Activated CD4-positive, alpha-beta memory T cell treated with anti-CD3 and anti-CD28 coated beads, Interleukin-2, amount 10 ng/mL, durations not matched to agents 7 days and 5 days (primary cell): ENCODE measurements at regions of chr6 and their contacts with region 1.

Region 1: DNA sequence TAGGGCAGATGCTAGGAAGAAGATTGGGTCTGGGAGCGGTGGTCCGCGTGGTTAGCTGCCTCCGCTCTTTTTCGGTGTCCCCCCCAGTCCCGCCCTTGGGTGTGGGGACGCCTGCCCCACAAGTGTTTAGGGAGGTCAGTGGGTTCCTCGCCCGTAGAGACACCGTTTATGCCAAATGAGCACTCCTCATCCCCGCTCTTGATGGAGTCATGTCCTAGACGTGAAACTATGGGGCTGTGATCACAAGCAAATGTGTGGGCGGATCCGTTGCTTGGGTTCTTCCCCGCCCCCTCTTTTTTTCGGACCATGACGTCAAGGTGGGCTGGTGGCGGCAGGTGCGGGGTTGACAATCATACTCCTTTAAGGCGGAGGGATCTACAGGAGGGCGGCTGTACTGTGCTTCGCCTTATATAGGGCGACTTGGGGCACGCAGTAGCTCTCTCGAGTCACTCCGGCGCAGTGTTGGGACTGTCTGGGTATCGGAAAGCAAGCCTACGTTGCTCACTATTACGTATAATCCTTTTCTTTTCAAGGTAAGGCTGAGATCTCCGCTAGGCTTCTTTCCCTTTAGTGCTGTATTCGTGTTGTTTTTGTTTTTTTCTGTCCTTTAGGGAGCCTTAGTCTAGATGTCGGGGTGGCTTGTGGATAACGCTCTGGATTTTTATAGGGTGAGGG is at the start of gene HSP90AB1:
- DNase-seq: peak; percentile 98
- H3K4me3 Mint-ChIP-seq: peak within 1 kb of the TSS; percentile 99
- H3K27ac Mint-ChIP-seq: peak within 1 kb of the TSS; percentile 97
- H3K4me1 Mint-ChIP-seq: peaks cover 49% of the 10 kb centered on the region
- H3K27me3 Mint-ChIP-seq: no peaks in the 10 kb centered on the region
- total RNA-seq, gene HSP90AB1: 478 to 479 TPM

Region 2: DNA sequence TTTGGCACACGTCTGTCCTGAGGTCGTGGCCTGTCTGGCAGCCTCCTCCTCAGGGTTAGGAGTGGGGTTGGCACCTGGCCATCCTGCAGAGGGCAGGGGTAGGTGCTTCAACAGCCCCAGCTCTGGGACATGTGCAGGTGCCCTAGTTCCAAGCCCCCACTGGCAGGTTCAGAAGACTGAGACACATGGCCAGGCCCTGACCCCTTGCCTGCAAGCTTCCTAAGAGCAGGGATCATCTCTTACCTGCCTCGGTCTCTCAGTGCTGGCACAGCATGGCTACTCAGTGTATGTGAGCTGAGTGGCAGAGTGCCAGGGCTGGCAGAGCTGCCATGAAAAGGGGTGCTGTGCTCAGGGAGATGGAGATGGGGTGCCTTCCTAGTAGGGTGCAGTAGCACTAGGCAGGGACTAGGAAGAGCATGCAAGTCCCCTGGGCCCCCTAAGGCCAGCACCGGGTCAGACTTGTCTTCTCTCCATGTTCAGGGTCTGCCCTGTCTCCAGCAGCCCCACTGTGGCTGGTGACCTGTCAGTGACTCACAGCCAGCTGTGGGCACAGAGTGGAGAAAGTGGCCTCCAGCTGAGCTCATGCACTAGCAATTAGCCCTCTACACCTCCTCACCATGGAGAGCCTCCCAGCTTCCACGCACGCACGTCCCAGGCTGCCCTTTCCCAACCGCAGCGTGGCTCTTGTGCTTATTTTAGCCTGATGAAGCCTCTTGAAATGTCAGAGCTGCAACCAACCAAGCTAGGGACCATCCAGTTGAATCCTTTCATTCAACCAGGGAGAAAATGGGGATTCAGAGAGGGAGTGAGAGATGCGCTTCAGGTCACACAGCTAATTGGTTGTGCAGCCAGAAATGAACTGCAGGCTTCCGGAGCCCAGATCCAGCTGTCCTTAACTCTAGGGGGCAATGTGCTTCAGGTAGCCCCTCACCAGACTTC is 236.1 kb before region 1 on chr6:
- CTCF ChIA-PET with region 1: no interaction called
- POLR2A ChIA-PET with region 1: no interaction called
- DNase-seq: no peak
- H3K4me3 Mint-ChIP-seq: no peak overlapping the region
- H3K27ac Mint-ChIP-seq: no peak overlapping the region
- H3K4me1 Mint-ChIP-seq: no peaks in the 10 kb centered on the region
- H3K27me3 Mint-ChIP-seq: peaks cover 27% of the 10 kb centered on the region

Region 3: DNA sequence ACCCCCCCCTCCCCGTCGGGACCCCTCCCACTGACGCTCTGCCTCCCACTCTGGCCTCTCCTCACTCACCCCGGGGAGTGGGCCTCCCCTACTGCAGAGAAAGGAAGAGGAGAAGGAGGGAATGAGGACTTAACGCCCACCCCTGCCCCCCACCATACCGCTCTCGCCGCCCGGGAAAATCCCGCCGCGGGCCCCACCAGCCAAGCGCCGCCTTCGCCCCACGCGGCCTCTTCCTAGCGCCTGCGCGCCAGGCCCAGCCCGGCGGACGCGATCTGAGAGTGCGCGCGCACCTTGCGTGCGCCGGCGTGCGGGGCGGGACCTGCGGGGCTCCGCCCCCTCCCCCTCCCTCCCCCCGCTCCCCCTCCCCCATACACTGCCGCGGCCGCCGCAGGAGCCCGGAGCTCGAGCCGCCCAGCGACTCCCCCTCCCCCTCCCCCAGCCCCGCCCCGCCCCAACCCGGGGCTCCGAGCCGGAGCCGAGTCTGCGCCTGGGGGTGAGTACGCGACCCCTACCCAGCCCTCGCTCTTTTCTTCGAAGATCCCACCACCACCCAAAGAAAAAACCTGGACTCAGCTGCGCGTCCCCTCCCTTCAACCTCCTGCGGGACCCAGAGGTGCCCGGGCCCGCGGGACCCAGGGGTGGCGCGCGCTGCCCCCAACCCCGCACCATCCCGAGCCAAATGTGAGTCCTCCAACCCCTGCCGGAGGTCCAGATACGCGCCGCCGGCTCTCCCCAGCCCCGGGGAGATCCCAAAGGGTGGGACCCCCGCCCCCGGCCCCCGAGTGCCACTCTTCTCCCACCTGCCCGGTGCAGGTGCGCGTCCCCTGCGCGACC is 119.4 kb before region 1 on chr6 and contains the starts of genes MRPL14 and TMEM63B:
- CTCF ChIA-PET with region 1: no interaction called
- POLR2A ChIA-PET with region 1: interaction called, 11 read pairs
- DNase-seq: peak; percentile 90
- H3K4me3 Mint-ChIP-seq: peak within 1 kb of the TSS; percentile 91
- H3K27ac Mint-ChIP-seq: peak within 1 kb of the TSS; percentile 83
- H3K4me1 Mint-ChIP-seq: peaks cover 47% of the 10 kb centered on the region
- H3K27me3 Mint-ChIP-seq: no peaks in the 10 kb centered on the region
- total RNA-seq, gene MRPL14: 36.0 to 39.0 TPM
- total RNA-seq, gene TMEM63B: 14.7 to 15.5 TPM

Region 4: DNA sequence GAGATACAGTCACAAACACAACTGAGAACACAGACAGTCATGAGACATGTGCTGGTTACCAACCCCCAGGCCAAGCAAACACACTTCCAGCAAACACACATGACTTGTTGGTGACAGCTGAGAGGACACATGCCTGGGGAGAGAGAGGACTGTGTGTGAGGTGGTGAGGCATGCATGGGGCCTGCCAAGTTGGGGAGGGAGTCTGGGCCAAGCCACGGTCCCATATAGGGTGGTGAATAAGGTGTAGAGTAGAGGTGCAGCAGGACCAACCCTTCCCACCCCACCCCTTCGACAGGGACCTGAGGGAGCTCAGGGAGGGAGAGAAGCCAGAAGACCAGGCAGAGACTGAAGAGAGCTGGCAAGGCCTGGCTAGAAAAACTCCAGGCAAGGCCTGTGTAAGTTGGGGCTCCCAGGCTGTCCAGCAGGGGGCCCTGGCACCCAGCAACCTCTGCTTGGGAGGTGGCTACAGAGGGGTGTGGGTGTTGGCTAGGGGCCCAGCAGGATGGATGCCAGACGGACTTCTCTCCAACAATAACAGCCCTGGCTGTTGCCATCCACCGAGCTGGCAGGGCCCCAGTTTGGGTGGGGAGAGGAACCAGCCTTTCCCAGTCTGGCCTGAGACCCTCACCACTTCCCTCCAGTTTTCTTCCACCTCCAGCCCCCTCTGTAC is 25.4 kb before region 1 on chr6:
- CTCF ChIA-PET with region 1: interaction called, 12 read pairs
- POLR2A ChIA-PET with region 1: interaction called, 88 read pairs
- DNase-seq: peak; percentile 82
- H3K4me3 Mint-ChIP-seq: no peak overlapping the region
- H3K27ac Mint-ChIP-seq: peak overlapping the region; percentile 3
- H3K4me1 Mint-ChIP-seq: peaks cover 46% of the 10 kb centered on the region
- H3K27me3 Mint-ChIP-seq: peaks cover 15% of the 10 kb centered on the region

Region 5: DNA sequence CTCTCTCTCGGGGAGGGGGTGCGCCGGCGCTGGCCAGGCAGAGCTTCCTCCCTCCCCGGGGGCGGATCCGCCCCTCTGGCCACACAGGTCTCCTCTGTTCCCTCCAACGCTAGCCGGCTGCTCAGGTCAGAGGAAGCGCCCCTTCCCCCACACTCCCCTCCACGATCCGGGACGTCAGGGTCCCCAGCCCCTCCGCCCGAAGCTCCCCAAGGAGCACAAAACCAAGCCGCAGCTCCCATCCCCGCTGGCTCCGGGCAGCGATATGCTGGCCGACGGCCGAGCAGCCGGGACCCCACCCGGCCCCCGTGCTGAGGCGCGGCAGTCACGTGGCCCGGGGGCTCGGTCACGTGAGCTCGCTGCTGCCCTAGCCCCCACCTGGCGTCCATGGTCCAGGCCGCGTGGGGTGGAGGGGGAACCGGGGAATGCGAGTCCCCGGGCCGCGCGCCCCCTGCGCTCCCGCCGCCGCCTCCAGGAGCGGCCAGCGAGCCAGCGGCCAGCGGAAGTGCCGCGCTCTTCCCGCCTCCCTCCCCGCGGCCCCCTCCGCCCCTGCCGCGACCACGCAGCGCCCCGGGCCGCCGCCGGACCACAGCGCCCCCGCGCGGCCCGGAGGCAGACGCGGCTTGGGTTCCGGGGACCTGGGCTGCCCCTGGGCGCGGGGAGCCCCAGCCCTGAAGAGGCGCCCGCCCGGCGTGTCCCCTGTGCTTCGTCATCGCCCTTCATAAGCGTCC is 10.4 kb after region 1 on chr6 and contains the start of gene SLC35B2:
- CTCF ChIA-PET with region 1: interaction called, 32 read pairs
- POLR2A ChIA-PET with region 1: interaction called, 136 read pairs
- DNase-seq: peak; percentile 73
- H3K4me3 Mint-ChIP-seq: peak within 1 kb of the TSS; percentile 83
- H3K27ac Mint-ChIP-seq: peak within 1 kb of the TSS; percentile 84
- H3K4me1 Mint-ChIP-seq: peaks cover 61% of the 10 kb centered on the region
- H3K27me3 Mint-ChIP-seq: no peaks in the 10 kb centered on the region
- total RNA-seq, gene SLC35B2: 35.8 to 37.2 TPM

Region 6: DNA sequence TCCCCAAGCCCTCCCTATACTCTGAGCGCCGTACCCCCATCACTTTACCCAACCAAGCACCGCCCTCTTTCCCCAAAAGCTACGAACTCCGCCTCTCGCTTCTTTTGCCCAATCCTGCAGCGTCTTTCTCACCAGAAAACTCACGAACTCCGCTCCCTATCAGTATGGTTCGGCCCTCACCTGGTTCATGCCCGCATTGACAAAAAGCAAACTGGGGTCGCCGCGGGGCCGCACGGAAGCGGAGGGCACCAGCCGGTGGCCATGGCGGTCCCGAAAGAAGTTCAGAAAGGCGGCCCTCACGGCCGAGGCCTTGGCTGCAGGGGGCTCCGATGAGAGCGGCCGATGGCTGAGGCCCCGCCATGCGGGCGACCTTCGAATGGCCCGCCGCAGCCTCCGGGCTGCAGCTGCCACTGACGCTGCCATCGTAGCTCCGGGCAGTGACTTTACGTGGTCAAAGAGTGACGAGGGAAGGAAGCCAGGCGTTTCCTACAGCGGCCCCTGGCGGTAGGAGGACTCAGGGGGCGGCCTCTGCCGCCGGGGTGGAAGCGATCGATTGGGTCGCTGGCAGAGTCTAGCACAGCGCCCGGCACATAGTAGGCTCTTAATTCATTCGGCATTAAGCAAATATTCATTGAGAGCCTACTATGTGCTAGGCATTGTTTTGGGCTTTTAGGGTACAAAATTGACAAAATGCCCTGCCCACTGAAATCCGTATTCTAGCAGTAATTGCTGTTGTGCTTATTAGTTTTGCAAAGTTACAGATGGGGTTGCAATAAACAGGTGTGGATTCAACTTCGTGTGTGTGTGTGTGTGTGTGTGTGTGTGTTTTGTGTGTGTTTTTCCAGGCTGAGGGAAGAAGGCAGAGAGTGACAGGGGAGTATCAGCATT is 66.3 kb after region 1 on chr6 and contains the start of gene AARS2:
- CTCF ChIA-PET with region 1: interaction called, 3 read pairs
- POLR2A ChIA-PET with region 1: interaction called, 10 read pairs
- DNase-seq: peak; percentile 92
- H3K4me3 Mint-ChIP-seq: peak within 1 kb of the TSS; percentile 96
- H3K27ac Mint-ChIP-seq: peak within 1 kb of the TSS; percentile 84
- H3K4me1 Mint-ChIP-seq: peaks cover 18% of the 10 kb centered on the region
- H3K27me3 Mint-ChIP-seq: peaks cover 13% of the 10 kb centered on the region
- total RNA-seq, gene AARS2: 14.8 to 15.0 TPM

Region 7: GRCh38 chr6:44446628-44447306 is 200.0 kb after region 1 on chr6:
- CTCF ChIA-PET with region 1: no interaction called
- POLR2A ChIA-PET with region 1: no interaction called
- DNase-seq: no peak
- H3K4me3 Mint-ChIP-seq: no peak overlapping the region
- H3K27ac Mint-ChIP-seq: no peak overlapping the region
- H3K4me1 Mint-ChIP-seq: peaks cover 4% of the 10 kb centered on the region
- H3K27me3 Mint-ChIP-seq: no peaks in the 10 kb centered on the region